ENCODE measurements at regions of chr11 and their contacts with region 1.

Region 1: GRCh38 chr11:117843666-117844484 is 19.3 kb upstream of the FXYD2 start:
- DNase-seq: peak in 1 of 2 donors; percentile 59
- ATAC-seq: peak; percentile 66 to 71
- H3K4me3 ChIP-seq: no peak overlapping the region
- H3K27ac ChIP-seq: no peak overlapping the region
- H3K4me1 ChIP-seq: peaks cover 0 to 5% of the 10 kb centered on the region in 2 donors
- H3K27me3 ChIP-seq: no peaks in the 10 kb centered on the region
- CTCF ChIP-seq: peak; percentile 93 to 98 (median 95)
- POLR2A ChIP-seq: no peak

Region 2: DNA sequence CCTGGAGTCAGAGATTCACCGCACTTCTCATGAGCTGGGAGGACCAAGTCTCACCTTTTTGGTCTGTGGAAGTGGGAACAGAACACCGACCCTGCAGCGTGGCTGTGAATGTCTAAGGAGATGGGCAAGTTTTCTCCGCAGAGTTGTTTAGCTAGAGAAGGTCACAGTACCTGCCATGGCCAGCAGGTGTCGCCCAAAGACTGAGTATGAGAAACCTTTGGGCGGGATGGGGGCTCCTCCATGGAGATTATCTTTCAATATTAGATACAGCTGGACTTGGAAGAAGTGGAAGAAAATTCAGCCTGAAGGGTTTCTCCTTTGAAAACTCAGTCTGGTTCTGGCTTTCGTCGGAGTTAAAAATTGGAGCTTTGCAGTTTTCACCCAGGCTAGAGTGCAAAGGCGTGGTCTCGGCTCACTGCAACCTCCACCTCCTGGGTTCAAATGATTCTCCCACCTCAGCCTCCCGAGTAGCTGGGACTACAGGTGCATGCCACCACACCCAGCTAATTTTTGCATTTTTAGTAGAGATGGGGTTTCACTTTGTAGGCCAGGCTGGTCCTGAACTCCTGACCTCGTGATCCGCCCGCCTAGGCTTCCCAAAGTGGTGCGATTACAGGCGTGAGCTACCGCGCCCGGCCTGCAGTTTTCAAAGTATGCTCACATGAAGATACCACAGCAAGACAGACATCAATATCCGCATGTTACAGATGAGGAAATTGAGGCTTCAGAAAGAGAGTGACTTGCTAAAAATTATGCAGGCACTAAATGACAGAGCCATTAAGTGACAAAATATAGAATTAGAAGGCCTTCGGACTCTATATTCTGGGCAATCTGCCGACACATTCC is 36.2 kb before region 1 on chr11:
- in situ Hi-C with region 1: no loop called
- intact Hi-C with region 1: loop called (anchors 5 kb)
- DNase-seq: peak in 1 of 2 donors; percentile 57
- ATAC-seq: peak; percentile 68 to 74
- H3K4me3 ChIP-seq: no peak overlapping the region
- H3K27ac ChIP-seq: no peak overlapping the region
- H3K4me1 ChIP-seq: no peaks in the 10 kb centered on the region
- H3K27me3 ChIP-seq: peaks cover 0 to 11% (median 0%) of the 10 kb centered on the region in 3 donors
- CTCF ChIP-seq: peak; percentile 83 to 89 (median 87)
- POLR2A ChIP-seq: no peak

Region 3: GRCh38 chr11:117907251-117907981 is 63.5 kb after region 1 on chr11:
- in situ Hi-C with region 1: no loop called
- intact Hi-C with region 1: loop called (anchors 5 kb)
- DNase-seq: peak; percentile 49 to 64
- ATAC-seq: peak; percentile 89 to 95
- H3K4me3 ChIP-seq: no peak overlapping the region
- H3K27ac ChIP-seq: no peak overlapping the region
- H3K4me1 ChIP-seq: no peaks in the 10 kb centered on the region
- H3K27me3 ChIP-seq: peaks cover 0 to 3% (median 0%) of the 10 kb centered on the region in 3 donors
- CTCF ChIP-seq: no peak
- POLR2A ChIP-seq: no peak

Region 4: DNA sequence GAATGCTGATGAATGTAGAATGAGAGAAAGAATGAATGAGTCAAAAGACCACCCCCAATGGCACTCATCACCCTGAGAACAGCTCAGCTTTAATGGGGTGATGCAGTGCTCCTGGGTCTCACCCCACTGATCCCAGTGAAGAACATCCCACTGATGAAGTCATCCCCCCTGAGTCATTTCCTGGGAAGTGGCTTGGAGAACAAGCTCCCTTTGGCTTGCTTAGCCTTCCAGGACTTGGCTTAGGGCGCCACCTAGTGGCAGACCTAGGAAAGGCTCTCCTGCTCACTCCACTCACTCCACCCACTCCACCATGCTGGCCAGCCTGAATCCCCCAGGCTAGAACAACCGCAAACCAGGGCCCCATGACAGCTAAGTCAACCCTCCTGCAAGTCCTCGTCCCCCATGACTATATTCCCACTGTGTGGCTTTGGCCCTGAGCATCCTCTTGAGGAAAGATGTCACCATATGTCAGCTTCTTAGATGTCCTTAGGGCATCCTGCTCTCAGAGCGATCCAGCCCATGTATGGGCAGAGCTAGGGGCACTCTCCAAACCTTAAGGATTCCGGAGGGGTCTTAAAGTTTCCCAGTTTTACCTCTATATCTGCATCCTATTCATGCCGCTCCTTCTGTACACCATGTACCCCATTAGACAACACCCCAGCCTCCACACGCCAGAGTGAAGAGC is 103.1 kb after region 1 on chr11:
- in situ Hi-C with region 1: loop called (anchors 5 kb)
- intact Hi-C with region 1: loop called (anchors 1 kb)
- DNase-seq: peak; percentile 62 to 76
- ATAC-seq: peak; percentile 94 to 96
- H3K4me3 ChIP-seq: no peak overlapping the region
- H3K27ac ChIP-seq: no peak overlapping the region
- H3K4me1 ChIP-seq: peaks cover 0 to 2% of the 10 kb centered on the region in 2 donors
- H3K27me3 ChIP-seq: peaks cover 0 to 3% (median 0%) of the 10 kb centered on the region in 3 donors
- CTCF ChIP-seq: peak; percentile 88 to 97 (median 94)
- POLR2A ChIP-seq: no peak

Region 5: DNA sequence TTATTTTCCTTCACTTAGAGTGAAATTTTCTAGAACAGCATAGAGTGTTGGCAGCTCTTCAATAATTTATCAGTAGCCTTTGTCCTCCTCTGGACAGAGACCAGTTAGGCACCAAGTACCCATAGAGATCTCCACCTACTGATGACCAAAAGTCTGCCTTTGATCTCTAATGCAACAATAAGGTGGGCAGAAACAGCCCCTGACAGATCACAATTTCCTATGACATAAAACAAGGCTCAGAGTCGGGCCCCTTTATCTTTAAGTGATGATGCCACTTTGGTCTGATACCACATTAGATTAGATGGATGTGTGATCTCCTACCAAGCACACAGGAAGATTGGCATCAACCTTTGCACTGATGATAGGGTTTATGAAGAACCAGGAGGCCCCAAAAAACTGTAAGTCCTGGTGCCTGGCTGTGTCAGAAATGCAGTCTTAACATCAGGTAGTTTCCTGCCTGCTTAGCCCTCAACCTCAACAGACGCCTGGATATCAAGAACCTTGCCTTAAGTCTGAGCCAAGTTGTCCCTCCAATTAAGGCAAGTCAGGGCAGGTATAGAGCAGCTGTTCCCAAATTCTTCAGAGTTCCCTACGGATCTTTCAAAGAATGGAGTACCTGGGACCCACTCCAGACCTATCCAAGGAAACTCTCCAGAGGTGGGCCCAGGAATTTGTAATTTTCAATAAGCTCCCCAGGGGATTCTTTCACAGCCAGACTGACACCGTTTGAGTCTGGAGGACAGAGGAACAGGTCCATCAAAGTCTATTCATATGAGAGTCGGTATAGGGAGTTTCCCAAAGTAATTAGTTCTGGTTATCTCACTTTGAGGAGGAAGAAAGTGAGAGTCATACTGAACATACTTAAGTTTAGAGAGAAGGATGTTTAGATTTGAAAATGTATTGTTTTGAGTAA is 202.4 kb after region 1 on chr11:
- in situ Hi-C with region 1: loop called in 1 of 4 experiments (anchors 10 kb)
- intact Hi-C with region 1: no loop called
- DNase-seq: no peak
- ATAC-seq: no peak
- H3K4me3 ChIP-seq: no peak overlapping the region
- H3K27ac ChIP-seq: no peak overlapping the region
- H3K4me1 ChIP-seq: no peaks in the 10 kb centered on the region
- H3K27me3 ChIP-seq: no peaks in the 10 kb centered on the region
- CTCF ChIP-seq: no peak
- POLR2A ChIP-seq: no peak

Region 6: DNA sequence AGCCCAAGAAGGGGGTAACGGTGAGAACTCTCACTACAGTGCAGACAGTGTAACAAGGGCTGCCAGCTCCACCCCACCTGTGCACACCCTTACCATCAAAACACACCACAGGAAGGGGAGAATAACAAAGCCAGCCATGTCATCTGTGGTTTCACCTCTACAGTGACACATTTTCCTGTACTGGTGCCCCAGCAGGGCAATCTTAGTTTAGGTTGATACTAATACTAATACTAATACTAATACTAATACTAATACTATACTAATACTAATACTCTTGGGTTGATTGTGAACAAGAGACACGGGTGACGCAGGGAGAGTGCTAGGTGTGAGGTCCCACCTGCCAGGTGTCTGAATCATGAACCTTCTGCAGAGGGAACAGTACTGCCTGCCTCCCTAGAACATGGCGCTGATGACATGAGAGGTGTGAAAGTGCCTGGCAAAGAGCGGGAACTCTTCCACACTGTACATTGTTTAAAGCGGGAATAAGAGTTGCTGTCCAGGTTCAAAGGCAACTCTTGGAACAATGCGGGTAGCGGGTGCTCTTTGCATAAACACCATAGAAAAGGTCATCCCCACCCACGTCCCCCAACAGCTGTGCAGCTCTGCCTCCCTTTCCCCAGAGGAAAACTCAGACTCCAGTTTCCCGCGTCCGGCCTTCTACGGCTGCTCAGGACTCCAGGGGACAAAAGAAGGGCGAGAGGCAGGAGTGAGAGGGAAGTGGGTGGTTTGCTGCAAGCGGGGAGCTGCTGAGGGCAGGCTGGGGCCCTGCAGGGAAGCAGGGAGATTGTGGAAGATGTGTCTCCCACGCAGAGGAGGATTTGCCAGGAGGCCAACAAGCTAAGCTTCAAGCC is 208.0 kb after region 1 on chr11:
- in situ Hi-C with region 1: loop called in 1 of 4 experiments (anchors 10 kb)
- intact Hi-C with region 1: loop called (anchors 2 kb)
- DNase-seq: no peak
- ATAC-seq: no peak
- H3K4me3 ChIP-seq: no peak overlapping the region
- H3K27ac ChIP-seq: no peak overlapping the region
- H3K4me1 ChIP-seq: no peaks in the 10 kb centered on the region
- H3K27me3 ChIP-seq: no peaks in the 10 kb centered on the region
- CTCF ChIP-seq: no peak
- POLR2A ChIP-seq: no peak

Measured in gastrocnemius medialis (tissue), 4 donors.